ENCODE measurements at regions of chr2 and their contacts with region 1.

Region 1: GRCh38 chr2:11583840-11584524 is 50.1 kb downstream of the GREB1 start:
- DNase-seq: peak; percentile 88
- H3K4me3 Mint-ChIP-seq: no peak overlapping the region
- H3K27ac Mint-ChIP-seq: peak overlapping the region; percentile 52
- H3K4me1 Mint-ChIP-seq: peaks cover 18% of the 10 kb centered on the region
- H3K27me3 Mint-ChIP-seq: peaks cover 5% of the 10 kb centered on the region

Region 2: DNA sequence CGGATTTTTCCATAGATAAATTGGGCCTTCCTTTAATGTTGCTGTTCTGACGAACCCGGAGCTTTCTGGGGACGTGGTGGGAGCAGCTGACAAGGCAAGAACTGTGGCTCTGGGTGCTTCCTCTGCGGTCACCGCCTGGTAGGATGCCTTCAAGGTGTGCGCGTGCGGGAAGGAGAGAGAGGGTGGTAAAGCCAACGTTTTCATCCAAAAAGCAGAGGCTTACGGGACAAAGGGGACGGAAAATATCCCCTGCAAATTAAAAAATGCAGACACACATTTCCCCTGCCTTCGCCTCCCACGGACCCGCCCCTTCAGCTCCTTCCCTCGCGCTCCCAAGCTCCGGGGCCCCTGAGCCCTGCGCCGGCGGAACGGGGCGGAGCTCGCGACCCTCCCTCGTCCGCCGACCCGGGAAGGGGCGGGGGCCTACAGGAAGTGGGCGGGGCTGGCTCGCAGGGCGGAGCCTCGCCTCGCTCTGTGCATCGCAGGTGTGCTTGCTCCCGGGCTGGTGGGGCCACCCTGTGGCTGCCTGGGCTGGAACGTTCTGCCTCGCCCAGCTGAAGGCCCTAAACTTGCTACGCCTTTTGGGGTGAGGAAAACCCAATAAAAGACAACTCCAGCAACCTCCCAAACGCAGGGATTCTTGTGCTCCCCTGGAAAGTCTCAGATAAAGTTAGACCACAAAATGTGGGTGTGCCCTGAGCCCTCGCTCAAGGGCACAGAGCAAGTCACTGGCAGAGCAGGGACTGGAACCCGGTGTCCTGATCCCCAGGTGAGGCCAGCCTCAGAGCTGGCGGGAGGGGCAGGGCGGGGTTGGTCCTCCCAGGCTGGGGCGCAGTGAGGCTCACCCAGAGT is 454.2 kb before region 1 on chr2:
- intact Hi-C with region 1: loop called (anchors 1 kb)
- DNase-seq: peak; percentile 96
- H3K4me3 Mint-ChIP-seq: peak overlapping the region; percentile 76
- H3K27ac Mint-ChIP-seq: peak overlapping the region; percentile 37
- H3K4me1 Mint-ChIP-seq: peaks cover 14% of the 10 kb centered on the region
- H3K27me3 Mint-ChIP-seq: peaks cover 6% of the 10 kb centered on the region

Region 3: GRCh38 chr2:11234309-11234708 is 349.7 kb before region 1 on chr2:
- intact Hi-C with region 1: loop called (anchors 2 kb)
- DNase-seq: no peak
- H3K4me3 Mint-ChIP-seq: no peak overlapping the region
- H3K27ac Mint-ChIP-seq: no peak overlapping the region
- H3K4me1 Mint-ChIP-seq: peaks cover 6% of the 10 kb centered on the region
- H3K27me3 Mint-ChIP-seq: no peaks in the 10 kb centered on the region

Region 4: DNA sequence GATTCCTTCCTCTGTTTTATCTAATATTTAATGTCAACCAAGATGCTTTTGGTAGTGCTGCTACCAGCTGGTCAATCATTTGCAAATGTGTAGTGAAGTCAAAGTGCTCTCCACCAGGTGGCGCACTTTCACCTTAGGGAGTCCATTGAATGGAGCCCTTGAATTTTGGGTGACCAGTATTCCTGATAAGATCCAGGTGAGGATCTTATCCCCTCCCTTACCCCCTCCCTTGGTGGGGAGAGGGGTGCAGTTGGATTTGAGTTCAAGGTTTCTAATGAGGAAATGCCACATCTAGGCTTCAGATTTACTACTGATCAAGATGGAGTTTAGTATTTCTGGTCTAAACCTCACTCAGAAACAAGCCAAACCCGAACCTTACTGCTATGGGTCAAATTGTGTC is 106.0 kb before region 1 on chr2:
- intact Hi-C with region 1: loop called (anchors 1 kb)
- DNase-seq: peak; percentile 93
- H3K4me3 Mint-ChIP-seq: no peak overlapping the region
- H3K27ac Mint-ChIP-seq: no peak overlapping the region
- H3K4me1 Mint-ChIP-seq: peaks cover under 1% of the 10 kb centered on the region
- H3K27me3 Mint-ChIP-seq: peaks cover 38% of the 10 kb centered on the region

Region 5: GRCh38 chr2:11743846-11744553 is 160.0 kb after region 1 on chr2:
- intact Hi-C with region 1: loop called (anchors 5 kb)
- DNase-seq: peak; percentile 90
- H3K4me3 Mint-ChIP-seq: peak overlapping the region; percentile 29
- H3K27ac Mint-ChIP-seq: peak overlapping the region; percentile 78
- H3K4me1 Mint-ChIP-seq: peaks cover 45% of the 10 kb centered on the region
- H3K27me3 Mint-ChIP-seq: no peaks in the 10 kb centered on the region

Measured in activated CD4-positive, alpha-beta T cell treated with anti-CD3 and anti-CD28 coated beads, Interleukin-2, amount 10 ng/mL, durations not matched to agents 24 days and 14 days (primary cell).